Calu3 (cell line): ENCODE measurements at regions of chr10 and their contacts with region 1.

Region 1: GRCh38 chr10:115129752-115130151 is 36.6 kb downstream of the ATRNL1 start:
- DNase-seq: no peak
- H3K4me3 Mint-ChIP-seq: no peak overlapping the region
- H3K27ac Mint-ChIP-seq: no peak overlapping the region
- H3K4me1 Mint-ChIP-seq: no peaks in the 10 kb centered on the region
- H3K27me3 Mint-ChIP-seq: no peaks in the 10 kb centered on the region
- CTCF ChIP-seq: no peak

Region 2: DNA sequence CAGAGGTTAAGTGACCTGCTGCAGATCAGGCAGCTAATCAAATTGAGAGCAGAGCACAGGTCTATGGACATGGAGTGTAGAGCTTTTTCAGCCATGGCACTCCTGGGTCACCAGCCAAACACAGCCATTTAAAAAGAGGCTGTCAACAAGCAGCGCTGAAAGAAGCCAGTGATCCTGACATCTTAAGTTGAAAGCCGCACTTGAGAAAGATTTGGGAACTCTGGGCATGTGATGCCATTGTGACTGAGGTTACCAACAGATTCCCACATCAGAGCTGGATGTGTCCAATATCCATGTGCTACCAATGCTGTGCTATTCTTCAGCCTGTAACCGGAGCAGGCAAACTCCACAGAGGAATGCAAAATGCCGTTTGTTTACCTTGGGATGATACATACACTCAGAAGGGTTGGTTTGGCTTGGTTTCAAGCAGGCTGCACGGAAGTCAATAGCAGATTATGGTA is 415.4 kb before region 1 on chr10:
- CTCF ChIA-PET with region 1: no interaction called
- intact Hi-C with region 1: loop called (anchors 10 kb)
- DNase-seq: peak; percentile 48
- H3K4me3 Mint-ChIP-seq: no peak overlapping the region
- H3K27ac Mint-ChIP-seq: no peak overlapping the region
- H3K4me1 Mint-ChIP-seq: peaks cover 29% of the 10 kb centered on the region
- H3K27me3 Mint-ChIP-seq: no peaks in the 10 kb centered on the region
- CTCF ChIP-seq: no peak

Region 3: DNA sequence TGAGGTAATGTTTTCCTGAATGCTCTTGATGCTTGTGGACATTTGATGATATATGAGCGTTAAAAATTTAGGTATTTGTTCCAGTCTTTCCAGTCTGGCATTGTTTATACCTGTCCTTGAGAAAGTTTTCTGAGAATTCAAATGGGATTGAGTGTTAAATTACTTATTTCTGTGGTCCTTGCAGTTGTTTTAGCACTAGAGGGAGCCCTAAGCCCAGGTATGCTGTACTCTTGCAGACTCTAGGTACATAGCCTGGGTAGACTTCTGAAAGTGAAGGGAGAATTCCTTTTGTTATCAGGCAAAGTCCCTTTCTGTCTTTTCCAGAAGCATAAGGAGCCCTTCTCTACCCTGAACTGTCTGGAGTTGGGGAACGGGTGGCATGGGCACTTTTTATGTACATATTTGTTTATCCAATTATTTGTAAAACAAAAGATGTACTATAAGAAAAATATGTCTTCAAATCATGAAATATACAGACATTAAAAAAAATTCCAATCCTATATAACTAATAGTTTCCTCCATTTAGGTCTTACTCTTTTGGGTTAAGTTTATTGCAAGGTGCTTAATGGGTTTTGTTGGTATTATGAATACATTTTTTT is 225.5 kb after region 1 on chr10:
- CTCF ChIA-PET with region 1: no interaction called
- intact Hi-C with region 1: no loop called
- DNase-seq: peak; percentile 55
- H3K4me3 Mint-ChIP-seq: no peak overlapping the region
- H3K27ac Mint-ChIP-seq: no peak overlapping the region
- H3K4me1 Mint-ChIP-seq: no peaks in the 10 kb centered on the region
- H3K27me3 Mint-ChIP-seq: no peaks in the 10 kb centered on the region
- CTCF ChIP-seq: peak; percentile 51